Activated B cell treated with CpG ODN at 0.5 μM for 24 hours (primary cell): ENCODE measurements at regions of chr11 and their contacts with region 1.

Region 1: DNA sequence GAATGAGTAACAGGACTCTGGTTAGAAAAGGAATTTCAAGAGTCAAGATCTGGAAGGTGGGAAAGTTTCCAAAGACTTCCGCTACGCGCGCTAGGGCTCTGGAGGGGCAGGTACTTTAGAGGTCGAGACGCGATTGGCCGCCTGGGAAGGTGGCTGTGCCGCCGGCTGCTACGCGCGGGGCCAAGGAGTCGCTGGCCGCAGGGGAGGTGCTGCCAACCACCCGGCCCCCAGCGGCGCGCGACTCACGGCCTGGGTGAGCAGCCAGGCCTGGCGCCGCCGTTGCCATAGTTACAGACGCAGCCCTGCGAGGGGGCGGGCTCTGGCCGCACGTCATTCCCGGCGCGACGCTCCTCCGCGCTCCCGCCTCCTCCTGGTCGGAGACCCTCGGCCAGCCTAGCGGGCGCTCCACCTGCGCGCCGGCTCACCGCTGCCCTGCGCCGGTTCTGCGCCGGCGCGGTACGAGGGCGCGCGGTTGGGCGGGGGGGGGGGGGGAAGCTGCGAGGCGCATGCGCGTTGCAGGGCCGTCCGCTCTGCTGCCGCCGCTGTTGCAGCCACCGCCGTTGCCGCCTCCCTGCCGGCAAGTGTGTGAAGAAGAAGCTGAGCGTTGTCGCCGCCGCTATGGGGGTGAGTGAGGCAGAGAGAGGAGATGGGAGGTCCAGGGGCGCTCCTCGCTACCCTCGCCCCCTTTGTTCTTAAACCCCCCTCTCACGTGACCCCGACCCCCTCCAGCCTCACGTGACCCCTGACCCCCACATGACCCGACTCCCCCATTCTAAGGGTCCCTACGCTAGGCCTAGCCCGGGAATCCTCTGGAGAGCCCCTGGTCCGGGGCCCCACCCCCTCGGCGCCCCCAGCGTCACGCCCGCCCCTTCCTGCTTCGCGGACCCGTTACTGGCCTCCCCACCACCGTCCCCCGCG is at the start of gene NAA40:
- DNase-seq: peak; percentile 94
- ATAC-seq: peak; percentile 91
- H3K4me3 Mint-ChIP-seq: peak within 1 kb of the TSS; percentile 90
- H3K27ac Mint-ChIP-seq: peak within 1 kb of the TSS; percentile 82
- H3K4me1 Mint-ChIP-seq: peaks cover 36% of the 10 kb centered on the region
- H3K27me3 Mint-ChIP-seq: no peaks in the 10 kb centered on the region
- CTCF ChIP-seq: no peak
- total RNA-seq, gene NAA40: 28.0 and 28.6 TPM in 2 replicates

Region 2: DNA sequence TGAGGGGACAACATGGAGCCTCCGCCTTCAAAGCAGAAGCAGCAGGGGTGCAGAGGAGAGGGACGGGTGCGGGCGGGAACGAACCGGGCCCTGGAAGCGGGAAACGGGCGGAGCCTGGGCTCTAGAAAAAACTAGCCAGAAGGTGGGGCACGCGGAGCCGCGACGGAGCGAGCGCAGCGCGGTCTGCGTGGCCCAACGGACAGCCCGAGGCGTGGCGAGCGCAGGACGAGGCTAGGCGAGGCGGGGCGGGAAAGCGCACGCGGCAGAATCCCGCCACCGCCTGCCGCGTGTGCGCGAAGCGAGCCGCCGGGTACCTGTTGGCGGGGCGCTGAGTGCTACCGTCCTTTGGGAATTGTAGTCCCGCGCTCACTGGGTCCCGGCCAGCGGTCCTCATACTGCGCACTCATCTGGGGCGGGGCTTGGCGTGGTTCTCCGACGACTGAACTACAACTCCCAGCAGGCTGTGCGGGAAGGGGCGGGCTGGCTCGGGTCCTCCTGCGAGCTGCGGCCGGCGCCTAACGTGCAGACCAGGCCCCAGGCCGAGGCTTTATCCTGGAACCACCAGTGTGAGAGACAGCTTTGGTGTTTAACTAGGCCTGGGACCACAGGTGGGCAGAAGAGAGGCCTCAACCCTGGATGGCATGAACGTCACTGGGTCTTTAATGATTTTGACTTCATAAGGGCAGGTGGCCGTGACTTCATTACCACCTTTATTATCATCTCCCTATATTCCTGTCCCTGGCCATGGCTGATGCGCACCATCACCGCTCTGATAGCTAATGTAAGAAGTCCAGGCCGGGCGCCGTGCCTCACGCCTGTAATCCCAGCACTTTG is 267.2 kb before region 1 on chr11 and contains the start of gene ATL3:
- CTCF ChIA-PET with region 1: no interaction called
- POLR2A ChIA-PET with region 1: no interaction called
- intact Hi-C with region 1: loop called (anchors 1 kb)
- DNase-seq: peak; percentile 97
- ATAC-seq: peak; percentile 95
- H3K4me3 Mint-ChIP-seq: peak within 1 kb of the TSS; percentile 84
- H3K27ac Mint-ChIP-seq: peak within 1 kb of the TSS; percentile 82
- H3K4me1 Mint-ChIP-seq: peaks cover 25% of the 10 kb centered on the region
- H3K27me3 Mint-ChIP-seq: no peaks in the 10 kb centered on the region
- CTCF ChIP-seq: no peak
- total RNA-seq, gene ATL3: 31.8 and 32.9 TPM in 2 replicates

Region 3: DNA sequence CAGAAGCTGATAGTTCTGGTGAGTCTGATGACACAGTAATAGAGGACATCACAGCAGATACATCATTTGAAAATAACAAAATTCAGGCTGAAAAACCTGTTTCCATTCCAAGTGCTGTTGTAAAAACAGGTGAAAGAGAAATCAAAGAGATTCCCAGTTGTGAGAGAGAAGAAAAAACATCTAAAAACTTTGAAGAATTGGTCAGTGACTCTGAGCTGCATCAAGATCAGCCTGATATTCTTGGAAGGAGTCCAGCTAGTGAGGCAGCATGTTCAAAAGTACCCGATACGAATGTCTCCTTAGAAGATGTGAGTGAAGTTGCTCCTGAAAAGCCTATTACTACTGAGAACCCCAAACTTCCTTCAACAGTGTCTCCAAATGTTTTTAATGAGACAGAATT is 218.8 kb before region 1 on chr11:
- CTCF ChIA-PET with region 1: no interaction called
- POLR2A ChIA-PET with region 1: no interaction called
- intact Hi-C with region 1: no loop called
- DNase-seq: no peak
- ATAC-seq: no peak
- H3K4me3 Mint-ChIP-seq: no peak overlapping the region
- H3K27ac Mint-ChIP-seq: no peak overlapping the region
- H3K4me1 Mint-ChIP-seq: no peaks in the 10 kb centered on the region
- H3K27me3 Mint-ChIP-seq: no peaks in the 10 kb centered on the region
- CTCF ChIP-seq: no peak

Region 4: DNA sequence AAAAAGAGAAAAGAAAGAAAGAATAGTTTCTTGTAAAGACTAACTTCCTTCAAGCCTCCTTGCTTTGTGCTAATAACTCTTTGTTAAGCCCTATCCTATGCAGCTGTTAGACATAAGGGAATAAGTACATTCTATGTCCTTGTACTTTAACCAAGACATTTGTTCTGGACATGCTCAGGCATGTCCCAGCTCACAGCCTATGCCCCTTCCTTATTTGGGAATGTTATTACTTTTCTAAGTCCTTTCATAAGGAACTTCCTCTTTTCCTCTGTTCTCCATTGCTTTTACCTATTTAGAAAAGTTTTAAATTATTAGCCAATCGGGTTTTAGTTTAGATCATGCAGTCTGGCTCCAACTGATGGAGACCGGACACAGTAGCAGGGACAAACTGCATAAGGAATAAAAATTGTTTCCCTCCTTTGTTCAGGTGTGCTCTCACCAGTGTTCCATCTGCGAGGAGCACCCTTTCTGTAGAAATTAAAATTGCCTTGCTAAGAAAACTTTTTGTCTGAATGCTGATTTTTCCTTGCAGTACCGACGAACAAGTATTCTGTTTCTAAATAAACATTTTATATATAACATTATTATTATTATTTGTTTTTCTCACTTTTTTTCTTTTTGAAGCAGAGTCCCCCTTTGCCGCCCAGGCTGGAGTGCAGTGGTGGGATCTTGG is 147.1 kb before region 1 on chr11:
- CTCF ChIA-PET with region 1: no interaction called
- POLR2A ChIA-PET with region 1: no interaction called
- intact Hi-C with region 1: no loop called
- DNase-seq: no peak
- ATAC-seq: no peak
- H3K4me3 Mint-ChIP-seq: no peak overlapping the region
- H3K27ac Mint-ChIP-seq: no peak overlapping the region
- H3K4me1 Mint-ChIP-seq: peaks cover 2% of the 10 kb centered on the region
- H3K27me3 Mint-ChIP-seq: peaks cover 4% of the 10 kb centered on the region
- CTCF ChIP-seq: no peak

Region 5: DNA sequence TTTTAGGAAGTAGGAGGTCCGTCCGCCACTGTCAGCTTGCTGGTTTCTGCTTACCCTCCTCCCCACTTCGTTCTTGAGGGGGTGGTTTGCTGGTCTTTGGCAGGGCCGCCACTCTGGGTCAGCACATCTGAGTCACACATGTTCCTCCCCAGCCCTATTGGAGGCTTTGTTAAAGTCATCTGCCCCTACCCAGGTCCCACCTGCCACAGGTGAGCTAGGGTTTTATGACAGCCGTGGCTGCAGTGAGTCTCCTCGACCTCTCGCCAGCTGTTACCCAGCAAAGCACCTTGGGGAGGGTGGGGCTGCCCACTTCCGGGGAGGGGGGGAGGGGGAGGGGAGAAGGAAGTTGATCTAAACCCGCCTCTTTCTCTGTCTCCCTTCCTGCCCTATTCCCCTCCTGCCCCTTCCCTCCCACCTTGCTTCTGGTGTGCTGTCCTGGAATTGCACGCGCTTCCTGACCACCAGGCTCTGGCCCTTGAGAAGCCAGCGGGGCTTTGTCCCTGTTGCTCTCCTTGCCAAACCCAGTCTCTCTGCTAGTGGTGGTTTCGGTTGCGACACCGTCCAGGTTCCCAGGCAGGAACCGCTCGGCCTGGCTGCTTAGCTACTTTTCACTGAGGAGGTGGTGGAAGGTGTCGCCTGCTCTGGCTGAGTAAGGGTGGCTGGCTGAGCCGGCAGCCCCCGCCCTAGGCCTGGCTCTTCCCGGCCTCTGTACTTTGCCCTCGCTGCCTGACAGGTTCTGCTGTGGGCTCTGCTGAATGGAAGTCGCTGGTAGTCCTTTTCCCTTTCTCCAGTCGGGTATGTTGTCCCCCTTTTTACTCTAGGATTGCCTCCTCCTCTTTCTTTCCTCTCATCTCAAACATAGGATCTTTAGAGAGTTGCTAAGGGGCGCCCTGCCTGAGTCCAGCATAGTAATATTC is 50.3 kb before region 1 on chr11:
- CTCF ChIA-PET with region 1: no interaction called
- POLR2A ChIA-PET with region 1: interaction called, 5 read pairs
- intact Hi-C with region 1: loop called (anchors 2 kb)
- DNase-seq: peak; percentile 44
- ATAC-seq: peak; percentile 89
- H3K4me3 Mint-ChIP-seq: peak overlapping the region; percentile 87
- H3K27ac Mint-ChIP-seq: peak overlapping the region; percentile 92
- H3K4me1 Mint-ChIP-seq: peaks cover 78% of the 10 kb centered on the region
- H3K27me3 Mint-ChIP-seq: no peaks in the 10 kb centered on the region
- CTCF ChIP-seq: no peak

Region 6: GRCh38 chr11:63974259-63975143 is 35.8 kb after region 1 on chr11 and contains the start of gene COX8A:
- CTCF ChIA-PET with region 1: no interaction called
- POLR2A ChIA-PET with region 1: no interaction called
- intact Hi-C with region 1: loop called (anchors 1 kb)
- DNase-seq: peak; percentile 78
- ATAC-seq: peak; percentile 99
- H3K4me3 Mint-ChIP-seq: peak within 1 kb of the TSS; percentile 100
- H3K27ac Mint-ChIP-seq: peak within 1 kb of the TSS; percentile 98
- H3K4me1 Mint-ChIP-seq: peaks cover 27% of the 10 kb centered on the region
- H3K27me3 Mint-ChIP-seq: no peaks in the 10 kb centered on the region
- CTCF ChIP-seq: no peak
- total RNA-seq, gene COX8A: 182 and 217 TPM in 2 replicates

Region 7: DNA sequence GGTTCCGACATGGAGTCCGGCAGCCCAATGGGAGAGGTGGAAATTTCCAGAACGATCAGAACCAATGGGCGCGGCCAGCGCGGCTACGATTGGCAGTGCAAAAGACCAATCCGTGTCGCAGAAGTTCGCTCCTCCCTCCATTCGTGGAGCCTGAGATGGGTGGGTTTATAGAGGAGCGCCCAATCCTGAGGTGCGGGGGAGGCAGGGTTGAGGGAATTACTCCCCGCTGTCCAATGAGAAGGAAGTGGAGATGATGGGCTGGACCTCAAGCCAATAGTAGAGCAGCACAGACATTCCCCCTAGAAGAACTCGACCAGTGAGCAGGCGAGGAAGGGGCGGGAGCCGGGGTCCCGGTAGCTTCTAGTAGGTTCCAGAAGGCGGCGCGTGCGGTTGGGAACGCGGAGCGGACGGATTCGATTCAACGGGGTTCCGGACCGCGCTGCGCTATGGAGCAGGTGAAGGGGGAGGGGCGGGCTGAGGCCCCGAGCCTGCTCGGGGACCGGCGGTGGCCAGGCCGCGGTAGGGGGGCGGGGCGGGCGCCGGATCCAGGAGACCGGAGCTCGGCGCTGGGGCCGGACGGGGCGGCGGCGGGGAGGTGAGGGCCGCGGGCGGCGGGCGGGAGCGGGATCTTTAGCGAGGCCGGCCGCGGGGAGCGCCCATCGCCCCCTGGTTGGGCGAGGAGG is 247.2 kb after region 1 on chr11 and contains the start of gene STIP1:
- CTCF ChIA-PET with region 1: no interaction called
- POLR2A ChIA-PET with region 1: interaction called, 5 read pairs
- intact Hi-C with region 1: loop called (anchors 1 kb)
- DNase-seq: peak; percentile 93
- ATAC-seq: peak; percentile 87
- H3K4me3 Mint-ChIP-seq: no peak within 1 kb of the TSS
- H3K27ac Mint-ChIP-seq: peak within 1 kb of the TSS; percentile 97
- H3K4me1 Mint-ChIP-seq: peaks cover 27% of the 10 kb centered on the region
- H3K27me3 Mint-ChIP-seq: no peaks in the 10 kb centered on the region
- CTCF ChIP-seq: no peak
- total RNA-seq, gene STIP1: 155 and 159 TPM in 2 replicates

Region 8: DNA sequence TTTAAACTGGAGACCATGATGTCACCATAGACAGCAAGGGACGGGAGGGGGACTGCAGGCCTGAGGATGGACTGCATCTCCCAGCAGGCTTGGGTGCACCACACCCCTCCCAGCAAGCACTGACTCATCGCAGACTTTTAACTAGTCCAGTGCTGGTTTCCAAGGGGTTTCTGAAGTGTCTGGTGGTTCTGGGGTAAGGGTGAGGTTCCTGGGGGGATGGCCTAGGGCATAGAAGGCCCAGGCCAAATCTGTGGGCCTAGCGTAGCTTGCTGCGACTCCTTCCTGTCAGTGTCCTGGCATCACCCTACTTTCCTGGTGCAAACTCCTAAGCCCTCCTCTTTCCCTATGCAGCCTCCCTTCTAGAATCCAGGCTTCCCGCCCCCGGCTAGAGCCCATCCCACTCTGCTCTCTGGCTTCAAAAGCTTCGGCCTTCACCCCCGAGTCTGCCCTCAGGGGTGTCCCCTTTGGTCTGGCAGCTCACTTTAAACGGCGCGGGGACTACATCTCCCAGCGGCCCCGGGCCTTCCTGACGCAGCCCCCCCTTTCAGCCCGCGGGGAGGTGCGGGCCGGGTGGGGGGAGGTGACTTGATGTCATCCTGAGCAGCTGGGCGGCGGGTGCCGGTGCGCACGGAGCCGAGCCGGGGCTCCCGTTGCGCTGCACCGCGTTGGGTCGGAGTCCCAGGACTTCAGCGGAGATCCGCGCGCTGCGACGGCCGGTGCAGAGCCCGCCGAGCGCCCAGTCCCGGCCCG is 985.5 kb after region 1 on chr11 and contains the start of gene PPP2R5B:
- CTCF ChIA-PET with region 1: no interaction called
- POLR2A ChIA-PET with region 1: no interaction called
- intact Hi-C with region 1: loop called (anchors 5 kb)
- DNase-seq: peak; percentile 83
- ATAC-seq: peak; percentile 95
- H3K4me3 Mint-ChIP-seq: peak within 1 kb of the TSS; percentile 93
- H3K27ac Mint-ChIP-seq: peak within 1 kb of the TSS; percentile 96
- H3K4me1 Mint-ChIP-seq: peaks cover 27% of the 10 kb centered on the region
- H3K27me3 Mint-ChIP-seq: no peaks in the 10 kb centered on the region
- CTCF ChIP-seq: no peak
- total RNA-seq, gene PPP2R5B: 12.0 and 12.6 TPM in 2 replicates